Endothelial cell of umbilical vein (primary cell): ENCODE measurements at regions of chr12 and their contacts with region 1.

Region 1: DNA sequence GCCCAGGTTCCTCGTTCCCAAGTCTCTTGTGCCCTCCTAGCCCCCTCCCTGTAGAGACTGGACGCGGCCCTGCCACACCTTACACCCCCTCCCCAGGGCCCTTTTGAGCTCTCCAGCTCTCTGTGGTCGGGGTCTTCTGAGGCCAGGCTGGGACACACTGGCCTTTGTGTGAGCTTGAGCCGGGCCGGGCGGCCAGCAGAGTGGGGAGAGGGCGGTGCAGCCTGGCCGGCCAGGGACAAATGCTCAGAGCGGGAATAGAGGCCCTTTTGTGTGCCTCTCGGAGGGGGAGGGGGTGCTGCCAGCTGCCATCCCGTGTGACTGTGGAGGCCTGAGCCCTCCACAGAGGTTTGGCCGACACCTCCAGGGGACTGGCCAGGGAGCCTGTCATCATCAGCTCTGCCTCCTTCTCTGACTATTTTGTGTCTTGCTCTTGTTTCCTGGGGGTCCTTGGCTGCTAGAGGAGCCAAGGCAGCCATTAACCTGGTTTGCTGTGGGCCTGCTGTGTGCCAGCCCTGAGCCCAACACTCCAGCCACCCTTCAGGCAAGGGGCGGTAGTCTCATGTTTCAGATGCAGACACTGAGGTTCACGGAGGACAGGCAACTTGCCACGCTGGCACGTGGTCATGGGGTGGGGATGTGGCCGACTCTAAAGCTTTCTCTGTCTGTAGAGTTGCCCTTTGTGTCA is 13.6 kb downstream of the FAM222A start:
- DNase-seq: no peak
- H3K4me3 ChIP-seq: no peak overlapping the region
- H3K27ac ChIP-seq: no peak overlapping the region
- H3K4me1 ChIP-seq: no peaks in the 10 kb centered on the region
- H3K27me3 ChIP-seq: no peaks in the 10 kb centered on the region
- CTCF ChIP-seq: no peak
- POLR2A ChIP-seq: no peak

Region 2: GRCh38 chr12:109642506-109643132 is 84.6 kb before region 1 on chr12:
- CTCF ChIA-PET with region 1: no interaction called
- POLR2A ChIA-PET with region 1: interaction called, 12 read pairs
- dilution Hi-C with region 1: no loop called
- intact Hi-C with region 1: no loop called
- DNase-seq: no peak
- H3K4me3 ChIP-seq: no peak overlapping the region
- H3K27ac ChIP-seq: no peak overlapping the region
- H3K4me1 ChIP-seq: no peaks in the 10 kb centered on the region
- H3K27me3 ChIP-seq: peaks cover 2 to 5% of the 10 kb centered on the region in 2 experiments
- CTCF ChIP-seq: no peak
- POLR2A ChIP-seq: no peak

Region 3: GRCh38 chr12:109685574-109686447 is 41.4 kb before region 1 on chr12:
- CTCF ChIA-PET with region 1: no interaction called
- POLR2A ChIA-PET with region 1: no interaction called
- dilution Hi-C with region 1: no loop called
- intact Hi-C with region 1: no loop called
- DNase-seq: no peak
- H3K4me3 ChIP-seq: no peak overlapping the region
- H3K27ac ChIP-seq: no peak overlapping the region
- H3K4me1 ChIP-seq: no peaks in the 10 kb centered on the region
- H3K27me3 ChIP-seq: peaks cover 3% of the 10 kb centered on the region in 2 experiments
- CTCF ChIP-seq: no peak
- POLR2A ChIP-seq: no peak